Activated B cell treated with CpG ODN at 0.5 μM for 24 hours (primary cell): ENCODE measurements at regions of chr14 and their contacts with region 1.

Region 1: DNA sequence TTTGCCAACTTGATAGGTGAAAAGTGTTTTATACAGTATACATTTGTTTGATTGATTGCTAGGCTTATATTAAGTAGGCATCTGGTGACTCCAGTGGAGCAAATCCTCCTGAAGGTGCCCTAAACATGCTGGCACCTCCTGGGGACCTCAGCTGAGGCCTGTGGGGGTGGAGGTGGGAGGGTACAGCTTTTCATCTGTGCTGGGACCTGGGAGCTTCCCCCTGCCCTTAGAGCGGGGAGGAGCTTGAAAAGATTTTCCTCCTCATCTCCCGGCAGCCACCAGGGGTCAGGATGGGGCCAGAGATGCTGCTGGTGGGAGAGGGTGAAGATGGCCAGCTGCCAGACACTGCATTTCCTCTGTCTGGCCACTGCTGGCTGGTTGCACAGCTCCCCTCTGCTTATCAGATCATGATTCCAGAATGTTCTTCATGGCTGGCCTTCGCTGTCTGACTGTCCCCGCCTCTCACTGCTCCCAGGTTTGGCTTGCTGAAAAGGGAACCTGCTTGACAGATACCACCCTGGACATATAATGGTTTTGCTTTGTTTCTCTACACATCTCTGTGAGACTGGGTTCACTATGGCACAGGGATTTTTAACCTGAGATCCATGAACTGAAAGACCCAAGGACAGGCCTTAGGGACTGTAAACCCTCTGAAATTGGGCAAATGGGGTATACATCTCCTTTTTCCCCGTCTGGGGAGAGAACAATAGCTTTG is 10.5 kb upstream of the JPH4 start:
- DNase-seq: peak; percentile 63
- ATAC-seq: peak; percentile 99
- H3K4me3 Mint-ChIP-seq: no peak overlapping the region
- H3K27ac Mint-ChIP-seq: no peak overlapping the region
- H3K4me1 Mint-ChIP-seq: peaks cover 5% of the 10 kb centered on the region
- H3K27me3 Mint-ChIP-seq: peaks cover 18% of the 10 kb centered on the region
- CTCF ChIP-seq: no peak

Region 2: DNA sequence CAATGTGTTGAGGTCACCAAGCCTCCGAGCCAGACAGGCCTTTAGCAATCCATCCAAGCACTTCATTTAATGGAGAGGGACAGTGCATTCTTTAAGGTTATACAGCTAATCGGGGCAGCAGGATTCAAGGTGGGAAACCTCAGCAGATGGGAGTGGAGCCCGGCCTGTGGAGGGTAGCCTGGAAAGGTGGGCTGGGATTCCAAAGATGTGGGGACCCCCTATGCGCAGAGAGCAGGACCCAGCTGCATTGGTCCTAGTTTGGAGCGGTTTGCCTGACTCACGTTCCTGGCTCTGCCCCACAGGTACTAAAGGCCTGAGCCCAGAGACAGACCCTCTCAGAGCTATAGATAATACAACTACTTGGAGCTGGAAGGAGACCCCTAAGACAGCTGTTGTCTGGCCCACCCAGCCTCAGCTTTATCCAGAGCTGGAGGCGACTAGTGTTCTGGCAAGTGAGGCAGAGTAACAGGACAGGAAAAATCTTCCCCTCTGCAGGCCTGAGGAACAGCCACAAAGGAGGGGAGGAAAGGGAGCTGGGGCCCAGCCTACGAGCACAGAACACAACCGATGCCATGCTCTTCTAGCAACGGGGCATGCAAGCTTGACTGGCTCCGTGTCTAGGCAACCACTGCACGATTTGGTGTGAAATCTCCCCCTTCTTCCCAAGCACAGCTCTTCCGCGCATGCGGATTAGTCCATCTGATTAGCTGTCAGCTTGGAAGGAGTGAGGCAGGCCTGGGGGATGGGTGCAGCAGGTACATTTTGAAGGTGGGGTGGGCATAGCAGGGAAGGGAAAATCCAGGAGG is 152.5 kb before region 1 on chr14:
- CTCF ChIA-PET with region 1: no interaction called
- POLR2A ChIA-PET with region 1: no interaction called
- intact Hi-C with region 1: no loop called
- DNase-seq: no peak
- ATAC-seq: no peak
- H3K4me3 Mint-ChIP-seq: no peak overlapping the region
- H3K27ac Mint-ChIP-seq: no peak overlapping the region
- H3K4me1 Mint-ChIP-seq: no peaks in the 10 kb centered on the region
- H3K27me3 Mint-ChIP-seq: peaks cover 29% of the 10 kb centered on the region
- CTCF ChIP-seq: no peak

Region 3: DNA sequence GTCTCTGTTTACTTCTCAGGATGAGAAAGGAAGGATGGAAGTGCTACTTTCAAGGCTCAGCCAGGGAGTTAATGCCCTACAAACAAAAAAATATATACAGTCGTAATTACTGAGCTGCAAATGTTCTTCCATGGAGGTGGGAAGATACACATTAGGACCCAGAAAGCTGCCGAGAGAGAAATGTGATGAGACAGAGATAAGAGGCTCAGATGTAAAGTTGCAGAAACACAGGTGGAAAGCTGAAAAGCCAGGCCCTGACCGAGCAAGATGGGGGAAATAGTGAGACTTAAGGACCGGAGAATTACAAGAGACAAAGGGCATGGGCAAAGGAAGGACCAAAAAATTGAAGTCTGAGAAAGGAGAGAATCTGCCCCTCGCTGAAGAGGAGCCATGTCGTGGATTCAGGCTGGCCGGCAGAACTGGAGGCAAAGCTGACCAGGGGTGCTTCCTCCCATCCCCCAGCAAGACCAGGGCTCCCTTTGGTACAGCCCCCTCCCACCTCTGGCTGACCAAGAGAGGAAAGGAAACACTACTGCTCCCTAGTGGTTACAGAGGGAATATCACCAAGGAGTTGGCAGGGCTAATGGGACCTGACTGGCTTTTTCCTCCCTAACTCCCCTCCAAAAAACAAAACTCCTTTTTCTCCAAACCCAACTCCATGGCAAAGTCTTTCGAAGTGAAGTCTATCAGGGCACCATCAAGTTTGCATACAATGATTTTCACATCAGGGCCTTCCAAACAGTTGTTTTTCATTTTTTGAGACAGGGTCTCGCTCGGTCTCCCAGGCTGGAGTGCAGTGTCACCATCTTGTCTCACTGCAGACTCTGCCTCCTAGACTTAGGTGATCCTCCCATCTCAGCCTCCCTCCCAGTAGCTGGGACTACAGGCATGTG is 49.5 kb before region 1 on chr14:
- CTCF ChIA-PET with region 1: no interaction called
- POLR2A ChIA-PET with region 1: no interaction called
- intact Hi-C with region 1: no loop called
- DNase-seq: no peak
- ATAC-seq: peak; percentile 76
- H3K4me3 Mint-ChIP-seq: no peak overlapping the region
- H3K27ac Mint-ChIP-seq: no peak overlapping the region
- H3K4me1 Mint-ChIP-seq: no peaks in the 10 kb centered on the region
- H3K27me3 Mint-ChIP-seq: peaks cover 2% of the 10 kb centered on the region
- CTCF ChIP-seq: peak; percentile 29

Region 4: DNA sequence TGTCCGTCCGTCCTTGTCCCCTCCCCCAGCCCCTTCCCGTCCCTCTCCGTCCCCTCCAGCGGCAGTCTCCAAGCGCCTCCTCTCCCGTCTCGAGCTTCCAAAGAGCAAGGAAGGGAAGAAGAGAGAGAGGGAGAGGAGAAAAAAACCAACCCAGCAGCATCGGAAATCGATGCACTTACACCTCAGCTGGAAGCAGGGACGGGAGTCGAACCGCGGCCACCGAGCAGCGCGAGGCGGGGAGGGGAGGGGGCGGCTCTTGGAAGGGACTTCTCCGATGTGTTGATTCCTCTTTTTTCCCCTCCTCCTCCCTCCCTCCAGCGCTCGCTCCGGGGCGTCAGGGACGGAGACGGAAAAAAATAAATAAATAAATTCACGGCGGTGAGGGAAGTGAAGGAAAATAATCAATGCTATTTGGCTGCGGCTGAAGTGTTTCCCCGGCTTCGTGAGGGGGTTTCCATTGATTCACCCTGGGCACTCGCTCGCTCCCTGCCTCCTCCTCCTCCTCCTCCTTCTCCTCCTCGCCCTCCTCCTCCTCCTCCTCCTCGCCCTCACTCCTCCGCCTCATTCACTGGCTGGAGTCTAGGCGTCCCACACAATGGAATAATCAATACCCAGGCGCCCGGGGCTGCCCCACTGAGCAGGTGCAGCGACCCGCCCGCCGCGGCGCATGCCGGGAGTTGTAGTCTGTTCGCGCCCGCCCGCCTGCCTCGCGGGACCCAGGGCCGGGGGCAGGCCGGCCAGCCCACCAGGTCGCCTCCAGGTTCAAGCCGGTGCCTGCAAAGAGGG is 37.7 kb before region 1 on chr14 and contains the start of gene ZFHX2:
- CTCF ChIA-PET with region 1: no interaction called
- POLR2A ChIA-PET with region 1: no interaction called
- intact Hi-C with region 1: no loop called
- DNase-seq: peak; percentile 79
- ATAC-seq: peak; percentile 53
- H3K4me3 Mint-ChIP-seq: no peak within 1 kb of the TSS
- H3K27ac Mint-ChIP-seq: peak within 1 kb of the TSS; percentile 81
- H3K4me1 Mint-ChIP-seq: peaks cover 12% of the 10 kb centered on the region
- H3K27me3 Mint-ChIP-seq: no peaks in the 10 kb centered on the region
- CTCF ChIP-seq: no peak
- total RNA-seq, gene ZFHX2: 2.2 and 2.6 TPM in 2 replicates

Region 5: GRCh38 chr14:23910101-23910875 is 321.2 kb after region 1 on chr14:
- CTCF ChIA-PET with region 1: no interaction called
- POLR2A ChIA-PET with region 1: no interaction called
- intact Hi-C with region 1: loop called (anchors 5 kb)
- DNase-seq: no peak
- ATAC-seq: no peak
- H3K4me3 Mint-ChIP-seq: no peak overlapping the region
- H3K27ac Mint-ChIP-seq: no peak overlapping the region
- H3K4me1 Mint-ChIP-seq: no peaks in the 10 kb centered on the region
- H3K27me3 Mint-ChIP-seq: peaks cover 26% of the 10 kb centered on the region
- CTCF ChIP-seq: no peak